Right ventricle myocardium inferior (tissue), 1 donor: ENCODE measurements at regions of chr9 and their contacts with region 1.

Region 1: DNA sequence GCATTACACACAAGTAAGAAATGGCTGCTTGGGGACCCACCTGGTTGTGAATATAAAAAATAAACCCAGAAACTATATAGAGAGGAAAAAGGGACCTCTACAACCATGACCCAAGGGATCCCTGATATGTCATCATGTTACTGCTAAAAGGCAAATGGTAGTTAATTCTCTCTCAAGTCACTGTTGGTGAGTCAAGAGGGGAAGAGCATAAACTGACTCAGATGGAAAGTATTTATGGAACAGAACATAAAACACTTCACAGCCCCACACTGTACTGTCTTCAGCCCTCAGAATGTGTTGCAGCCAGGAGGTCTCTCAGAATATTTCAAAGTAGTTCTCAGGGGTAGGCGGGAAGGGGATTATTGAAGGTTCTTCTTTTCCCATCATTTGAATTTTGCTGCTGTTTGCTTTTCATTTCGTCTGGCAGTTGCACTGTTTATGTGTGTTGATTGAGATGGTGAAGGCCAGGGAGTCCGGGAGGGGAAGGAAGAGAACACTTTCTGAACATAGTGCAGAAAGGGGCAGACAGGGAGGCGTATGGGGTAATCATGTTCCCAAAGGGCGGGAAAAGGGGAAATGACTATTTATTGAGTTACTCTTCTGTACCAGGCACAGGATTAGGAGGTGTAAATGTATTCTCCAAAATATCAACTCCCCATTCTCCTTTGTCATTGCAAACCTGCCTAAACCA is 85.5 kb downstream of the TEK start:
- DNase-seq: no peak
- ATAC-seq: no peak

Region 2: GRCh38 chr9:27033823-27034403 is 160.6 kb before region 1 on chr9:
- intact Hi-C with region 1: loop called (anchors 5 kb)
- DNase-seq: no peak
- ATAC-seq: no peak

Region 3: GRCh38 chr9:27117489-27118135 is 76.9 kb before region 1 on chr9:
- intact Hi-C with region 1: loop called (anchors 5 kb)
- DNase-seq: peak; percentile 84
- ATAC-seq: peak; percentile 95

Region 4: DNA sequence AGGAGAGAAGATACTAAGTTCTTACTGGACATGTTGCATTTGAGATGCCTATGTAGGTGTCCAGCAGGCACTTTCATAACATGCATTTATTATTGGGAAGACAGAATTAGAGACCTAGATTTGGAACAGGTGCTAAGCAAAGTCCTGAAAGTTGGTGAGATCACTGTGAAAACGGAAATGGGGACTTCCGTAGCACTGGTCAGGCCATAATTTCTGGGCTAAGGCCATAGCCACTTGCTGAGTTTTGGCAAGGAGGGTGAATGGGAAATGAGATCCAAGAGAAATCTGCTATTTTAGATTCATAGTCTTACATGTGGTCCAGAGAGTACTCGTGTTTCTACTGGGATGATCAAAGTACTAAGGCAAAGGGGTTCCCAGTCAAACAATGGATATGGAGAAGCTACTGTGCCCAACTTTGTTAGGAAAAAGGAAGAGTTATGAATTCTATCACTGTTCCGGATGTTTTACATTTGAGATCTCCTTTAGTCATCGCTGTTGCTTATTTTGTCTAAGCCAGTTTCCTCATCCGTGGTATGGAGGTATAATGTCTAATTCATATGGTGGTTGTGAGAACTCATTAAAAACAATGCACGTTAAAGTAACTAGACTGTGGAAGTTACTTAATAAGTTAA is 52.1 kb before region 1 on chr9:
- intact Hi-C with region 1: loop called (anchors 10 kb)
- DNase-seq: no peak
- ATAC-seq: no peak